PC-9 (cell line): ENCODE measurements at regions of chr2 and their contacts with region 1.

Region 1: DNA sequence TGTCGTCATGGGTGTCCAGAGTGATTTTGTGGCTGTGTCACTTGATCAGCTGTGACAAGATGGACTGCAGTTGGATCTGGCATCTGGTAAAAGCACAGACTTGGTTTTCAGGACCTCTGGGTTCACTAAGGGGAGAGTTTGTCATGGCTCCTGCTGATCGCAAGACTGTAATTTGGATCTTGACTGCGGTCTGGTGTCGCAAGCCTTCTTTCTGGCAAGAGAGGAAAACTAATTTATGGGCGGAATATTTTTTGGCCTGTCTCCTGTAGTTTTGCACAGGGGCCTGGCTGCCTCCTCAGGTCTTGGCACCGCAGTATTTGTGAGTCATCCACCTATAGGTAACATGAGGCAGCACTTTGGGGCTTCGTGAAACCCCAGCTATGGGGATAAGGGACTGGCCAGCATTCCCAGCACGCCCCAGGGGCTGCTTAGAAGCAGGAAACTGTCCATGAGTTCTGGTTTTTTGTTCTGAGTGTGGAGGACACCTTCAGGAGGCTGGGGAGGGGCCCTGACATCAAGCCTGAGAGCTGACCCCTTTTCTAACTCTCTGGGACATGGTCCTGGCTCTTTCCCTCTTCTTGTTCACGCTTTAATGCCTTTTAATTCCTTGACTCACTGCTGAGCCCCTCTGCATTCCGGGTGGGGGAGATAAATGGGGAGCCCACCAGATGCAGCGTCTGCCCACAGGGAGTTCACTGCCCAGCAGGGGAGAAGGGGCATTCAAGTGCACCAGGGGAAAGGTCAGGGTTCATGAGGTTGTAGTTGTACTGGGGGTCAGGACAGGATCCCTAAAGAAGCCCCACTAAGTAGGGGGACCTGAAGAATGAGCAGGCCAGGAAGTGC is 12.2 kb downstream of the SH3BP4 start:
- DNase-seq: peak; percentile 90 to 98
- H3K4me3 ChIP-seq: peak overlapping the region; percentile 5; the same call in 1 of the 2 replicates
- H3K27ac ChIP-seq: peak overlapping the region; percentile 90
- H3K4me1 ChIP-seq: peaks cover 92% of the 10 kb centered on the region
- H3K27me3 ChIP-seq: no peaks in the 10 kb centered on the region
- CTCF ChIP-seq: 0 out of 2 replicates have a peak, but pooled peaks have one; percentile 14

Region 2: DNA sequence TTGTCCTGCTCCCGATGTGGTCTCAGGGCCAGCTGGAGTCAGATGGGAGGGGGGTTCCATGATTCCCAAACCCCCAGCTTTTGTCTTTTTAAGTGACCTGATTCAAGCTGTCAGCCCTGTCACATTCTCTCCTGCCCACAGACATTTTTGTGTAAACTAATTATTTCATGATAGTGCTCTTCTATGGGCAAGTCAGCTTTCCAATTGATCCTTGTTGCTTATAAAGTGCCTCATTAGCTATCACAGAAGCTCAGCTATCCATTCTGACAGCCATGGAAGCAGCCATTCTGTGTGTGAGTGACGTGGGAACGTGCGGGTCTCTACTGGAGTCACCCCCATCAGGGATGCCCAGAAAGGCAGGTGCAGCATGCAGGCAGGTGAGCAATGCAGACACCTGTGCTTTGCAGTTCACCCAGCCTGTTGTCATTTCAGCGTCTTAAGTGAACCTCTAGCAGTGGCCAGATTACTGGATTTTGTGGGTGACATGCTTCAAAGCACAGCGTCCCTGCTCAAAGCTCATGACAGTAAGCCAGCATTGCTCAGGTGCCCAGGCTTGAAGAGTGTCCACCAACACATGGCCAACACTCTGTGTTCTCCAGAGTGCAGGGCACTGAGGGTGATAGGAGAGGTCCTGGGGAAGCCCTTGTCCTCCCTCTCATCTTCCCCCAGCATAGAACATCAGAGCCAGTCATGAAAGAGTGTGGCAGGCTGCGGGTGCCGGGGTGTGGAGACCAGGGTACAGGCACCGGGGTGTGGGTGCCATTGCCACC is 174.3 kb before region 1 on chr2:
- CTCF ChIA-PET with region 1: no interaction called
- POLR2A ChIA-PET with region 1: no interaction called
- intact Hi-C with region 1: no loop called
- DNase-seq: no peak
- H3K4me3 ChIP-seq: no peak overlapping the region
- H3K27ac ChIP-seq: no peak overlapping the region
- H3K4me1 ChIP-seq: no peaks in the 10 kb centered on the region
- H3K27me3 ChIP-seq: no peaks in the 10 kb centered on the region
- CTCF ChIP-seq: no peak

Region 3: GRCh38 chr2:234996069-234996940 is 32.3 kb after region 1 on chr2:
- CTCF ChIA-PET with region 1: interaction called, 10 read pairs
- POLR2A ChIA-PET with region 1: no interaction called
- intact Hi-C with region 1: loop called (anchors 5 kb)
- DNase-seq: peak in 1 of 2 experiments; percentile 89
- H3K4me3 ChIP-seq: no peak overlapping the region
- H3K27ac ChIP-seq: 0 out of 2 replicates have a peak overlapping the region, but pooled peaks have one; percentile 6
- H3K4me1 ChIP-seq: peaks cover 41% of the 10 kb centered on the region
- H3K27me3 ChIP-seq: no peaks in the 10 kb centered on the region
- CTCF ChIP-seq: no peak